ENCODE measurements at regions of chr22 and their contacts with region 1.

Region 1: DNA sequence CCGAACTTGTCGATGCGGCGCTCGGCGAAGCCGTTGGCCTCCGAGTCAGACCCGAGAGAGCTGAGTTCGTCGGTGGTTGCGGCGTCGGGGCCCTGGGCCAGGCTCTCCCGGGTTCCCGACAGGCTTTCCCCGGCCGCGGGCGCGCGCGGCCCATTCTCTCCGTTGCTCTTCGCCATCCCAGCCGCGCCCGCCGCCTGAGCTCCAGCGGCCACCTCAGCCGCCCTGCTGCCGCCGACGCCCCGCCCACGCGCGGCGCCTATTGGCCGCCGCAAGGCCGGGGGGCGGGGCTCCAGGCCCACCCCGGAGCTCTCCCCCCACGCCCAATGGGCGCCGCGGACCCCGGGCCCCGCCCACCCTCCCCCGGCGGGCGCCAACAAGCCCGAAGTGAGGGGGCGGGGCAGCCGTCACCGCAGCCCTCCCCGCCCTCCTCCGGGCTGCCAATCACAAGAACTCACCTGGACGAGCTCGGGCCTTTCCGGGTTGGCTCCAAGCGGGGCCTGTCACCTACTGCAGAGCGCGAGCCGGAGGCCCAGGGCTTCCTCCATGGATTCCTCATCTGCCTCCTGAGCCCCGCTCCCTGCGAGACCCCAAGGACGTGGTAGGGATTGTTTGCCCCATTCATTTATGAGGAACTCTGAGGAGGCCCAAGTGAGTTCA is at the start of gene TBC1D10A:
- DNase-seq: peak; percentile 95
- H3K4me3 Mint-ChIP-seq: peak within 1 kb of the TSS; percentile 82
- H3K27ac Mint-ChIP-seq: peak within 1 kb of the TSS; percentile 73
- H3K4me1 Mint-ChIP-seq: peaks cover 46% of the 10 kb centered on the region
- H3K27me3 Mint-ChIP-seq: no peaks in the 10 kb centered on the region
- total RNA-seq, gene TBC1D10A: 19.4 to 21.4 TPM

Region 2: GRCh38 chr22:30305519-30305905 is 21.3 kb before region 1 on chr22:
- CTCF ChIA-PET with region 1: interaction called, 8 read pairs
- intact Hi-C with region 1: loop called (anchors 1 kb)
- DNase-seq: peak; percentile 78
- H3K4me3 Mint-ChIP-seq: peak overlapping the region; percentile 70
- H3K27ac Mint-ChIP-seq: peak overlapping the region; percentile 97
- H3K4me1 Mint-ChIP-seq: peaks cover 98% of the 10 kb centered on the region
- H3K27me3 Mint-ChIP-seq: no peaks in the 10 kb centered on the region

Region 3: DNA sequence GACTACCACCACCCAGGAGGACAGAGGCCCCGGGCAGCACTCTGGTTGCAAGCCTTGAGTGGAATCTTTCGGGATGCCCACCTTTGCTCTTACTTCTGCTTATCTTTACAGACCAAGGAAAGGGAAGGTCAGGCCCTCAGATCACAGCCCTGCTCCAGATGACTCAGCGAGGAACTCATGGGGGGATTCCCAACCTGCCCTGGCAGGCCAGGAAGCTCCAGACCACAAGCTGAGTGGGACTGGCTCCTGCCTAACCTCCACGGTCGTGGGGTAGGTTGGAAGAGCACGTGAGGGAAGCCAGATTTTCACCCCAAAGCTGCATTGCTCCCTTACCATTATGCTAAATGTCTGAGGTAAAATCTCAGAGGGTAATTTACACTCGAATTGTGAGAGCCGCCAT is 11.9 kb before region 1 on chr22:
- CTCF ChIA-PET with region 1: interaction called, 6 read pairs
- intact Hi-C with region 1: loop called (anchors 1 kb)
- DNase-seq: peak; percentile 76
- H3K4me3 Mint-ChIP-seq: no peak overlapping the region
- H3K27ac Mint-ChIP-seq: peak overlapping the region; percentile 85
- H3K4me1 Mint-ChIP-seq: peaks cover 93% of the 10 kb centered on the region
- H3K27me3 Mint-ChIP-seq: no peaks in the 10 kb centered on the region

Region 4: DNA sequence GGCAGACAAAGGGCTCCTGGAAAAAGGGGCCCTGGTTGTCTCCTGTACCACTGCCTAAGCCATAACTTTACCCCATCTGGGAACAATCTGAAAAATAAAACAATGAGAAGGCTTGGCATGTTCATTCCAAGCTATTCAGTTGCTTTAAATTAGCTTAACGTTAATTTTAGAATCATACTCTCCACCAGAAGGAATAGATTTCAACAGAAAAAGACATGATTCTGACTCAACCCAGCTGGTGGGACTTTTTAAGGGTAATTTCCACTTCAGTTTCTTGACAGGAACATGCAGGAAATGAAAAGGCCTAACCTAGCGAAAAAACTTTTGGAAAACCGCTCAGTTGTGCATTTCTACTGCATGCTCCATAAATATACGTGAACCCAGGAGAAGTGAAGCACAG is 22.0 kb after region 1 on chr22:
- CTCF ChIA-PET with region 1: interaction called, 3 read pairs
- intact Hi-C with region 1: loop called (anchors 1 kb)
- DNase-seq: peak; percentile 29
- H3K4me3 Mint-ChIP-seq: peak overlapping the region; percentile 4
- H3K27ac Mint-ChIP-seq: peak overlapping the region; percentile 90
- H3K4me1 Mint-ChIP-seq: peaks cover 79% of the 10 kb centered on the region
- H3K27me3 Mint-ChIP-seq: no peaks in the 10 kb centered on the region

Region 5: GRCh38 chr22:30356449-30357235 is 29.8 kb after region 1 on chr22 and contains the starts of genes CCDC157 and SF3A1:
- CTCF ChIA-PET with region 1: interaction called, 3 read pairs
- intact Hi-C with region 1: loop called (anchors 1 kb)
- DNase-seq: peak; percentile 87
- H3K4me3 Mint-ChIP-seq: peak within 1 kb of the TSS; percentile 92
- H3K27ac Mint-ChIP-seq: peak within 1 kb of the TSS; percentile 84
- H3K4me1 Mint-ChIP-seq: peaks cover 50% of the 10 kb centered on the region
- H3K27me3 Mint-ChIP-seq: no peaks in the 10 kb centered on the region
- total RNA-seq, gene CCDC157: 1.1 to 1.5 TPM
- total RNA-seq, gene SF3A1: 274 to 276 TPM

Region 6: GRCh38 chr22:30423982-30424963 is 97.4 kb after region 1 on chr22:
- CTCF ChIA-PET with region 1: no interaction called
- intact Hi-C with region 1: loop called (anchors 2 kb)
- DNase-seq: peak; percentile 99
- H3K4me3 Mint-ChIP-seq: peak overlapping the region; percentile 97
- H3K27ac Mint-ChIP-seq: peak overlapping the region; percentile 96
- H3K4me1 Mint-ChIP-seq: peaks cover 50% of the 10 kb centered on the region
- H3K27me3 Mint-ChIP-seq: no peaks in the 10 kb centered on the region